A549 (cell line): ENCODE measurements at regions of chr7 and their contacts with region 1.

Region 1: DNA sequence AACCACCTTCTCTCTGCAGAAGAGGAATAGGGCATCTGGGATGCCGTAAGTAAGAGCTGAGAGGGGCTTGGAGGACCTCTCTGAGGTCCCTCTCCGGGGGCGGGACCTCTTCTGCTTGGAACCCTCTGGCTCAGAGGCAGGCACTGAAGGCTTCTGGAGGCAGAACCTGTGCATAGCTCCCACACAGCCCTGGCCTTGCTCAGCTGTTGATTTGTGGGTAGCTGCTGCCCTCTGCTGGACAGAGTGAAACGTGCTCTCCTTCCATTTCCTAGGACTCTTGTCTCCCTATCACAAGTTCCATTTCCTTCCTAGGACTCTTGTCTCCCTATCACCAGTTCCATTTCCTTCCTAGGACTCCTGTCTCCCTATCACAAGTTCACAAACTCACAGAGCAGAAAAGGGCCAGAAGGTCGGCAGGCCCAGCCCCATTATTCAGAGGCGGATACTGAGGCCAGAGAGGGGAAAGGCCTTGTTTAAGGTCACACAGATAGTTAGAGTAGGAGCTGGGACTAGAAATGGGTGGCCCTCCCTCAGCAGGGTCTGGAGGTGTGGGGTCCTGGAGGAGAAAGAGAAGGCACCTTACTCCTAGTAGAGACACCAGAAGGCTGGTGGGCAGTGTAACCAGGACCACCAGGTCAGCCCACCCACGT is 30.3 kb upstream of the GARS1 start:
- DNase-seq: peak; percentile 64 to 83
- ATAC-seq: peak; percentile 98 to 99
- H3K4me3 ChIP-seq: no peak overlapping the region
- H3K27ac ChIP-seq: no peak overlapping the region
- H3K4me1 ChIP-seq: no peaks in the 10 kb centered on the region
- CTCF ChIP-seq: peak; percentile 91
- EP300 ChIP-seq: no peak
- POLR2A ChIP-seq: no peak
- RAD21 ChIP-seq: peak; percentile 89 to 93

Region 2: DNA sequence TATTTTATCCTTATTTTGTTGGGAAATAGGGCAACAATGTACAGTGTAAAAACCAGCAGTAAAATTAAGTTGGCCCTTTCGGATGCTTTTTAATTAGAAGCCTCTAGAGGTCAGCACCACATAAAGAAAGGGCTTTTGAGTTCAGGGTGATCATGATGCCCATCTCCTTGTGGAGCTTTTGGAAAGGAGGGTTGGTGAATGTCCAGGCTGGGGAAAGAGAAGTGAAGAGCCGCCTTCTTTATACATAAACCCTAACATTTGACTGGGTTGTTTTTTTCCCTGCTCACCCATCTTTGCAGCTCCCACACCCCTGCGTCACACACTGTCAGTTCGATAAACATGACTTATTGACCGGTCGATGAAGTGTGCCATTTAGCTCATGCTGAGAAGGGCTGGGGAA is 399.8 kb before region 1 on chr7:
- CTCF ChIA-PET with region 1: interaction called, 19 read pairs
- POLR2A ChIA-PET with region 1: no interaction called
- DNase-seq: peak; percentile 55 to 57
- ATAC-seq: peak; percentile 54 to 84; a peak in 5 of 6 replicates
- H3K4me3 ChIP-seq: no peak overlapping the region
- H3K27ac ChIP-seq: no peak overlapping the region
- H3K4me1 ChIP-seq: peaks cover 28% of the 10 kb centered on the region
- CTCF ChIP-seq: peak; percentile 84
- EP300 ChIP-seq: no peak
- POLR2A ChIP-seq: no peak
- RAD21 ChIP-seq: peak; percentile 84

Region 3: DNA sequence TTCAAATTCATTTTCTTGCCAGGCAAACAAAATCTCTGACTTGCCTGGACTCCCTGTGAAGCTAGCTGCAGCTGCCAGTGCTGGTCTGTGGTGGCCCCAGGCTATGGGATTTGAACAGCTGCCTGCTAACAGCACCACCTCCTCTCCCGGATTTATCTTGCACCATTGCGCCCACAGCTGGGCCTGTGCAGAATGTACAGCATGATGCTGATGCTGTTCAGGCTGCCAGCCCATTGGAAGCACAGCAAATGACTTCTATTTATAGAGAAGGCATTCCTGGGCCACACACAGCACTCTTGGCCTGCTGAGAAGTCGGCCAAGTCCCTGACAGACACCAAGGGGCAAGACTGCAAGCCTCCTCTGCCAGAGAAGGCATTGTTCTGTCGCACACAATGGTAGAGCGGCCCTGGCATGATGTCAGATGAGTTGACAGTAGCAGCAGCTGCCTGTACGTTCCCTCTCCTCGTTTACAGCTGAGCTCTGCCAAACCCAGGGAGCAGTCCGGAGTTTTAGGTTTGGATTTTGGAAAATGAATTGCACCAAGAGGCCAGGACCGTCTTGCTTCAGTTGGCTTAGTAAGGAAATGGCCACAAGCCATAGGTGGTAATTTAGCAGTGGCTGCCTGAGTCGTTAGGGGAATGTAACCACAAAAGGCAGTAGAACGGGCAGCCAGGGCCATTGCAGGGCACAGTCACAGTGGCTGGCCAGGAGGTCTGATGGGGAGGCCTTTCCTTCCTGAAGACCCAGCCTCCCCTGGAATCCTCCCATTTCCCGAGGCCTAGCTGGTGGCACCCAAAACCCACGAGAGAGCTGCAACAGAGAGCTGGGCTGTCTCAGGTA is 391.1 kb before region 1 on chr7:
- CTCF ChIA-PET with region 1: interaction called, 15 read pairs
- POLR2A ChIA-PET with region 1: no interaction called
- DNase-seq: peak in 1 of 2 experiments; percentile 48
- ATAC-seq: peak; percentile 41 to 69; a peak in 4 of 6 replicates
- H3K4me3 ChIP-seq: no peak overlapping the region
- H3K27ac ChIP-seq: no peak overlapping the region
- H3K4me1 ChIP-seq: peaks cover 28% of the 10 kb centered on the region; the same call in 2 of the 3 replicates
- CTCF ChIP-seq: no peak
- EP300 ChIP-seq: no peak
- POLR2A ChIP-seq: no peak
- RAD21 ChIP-seq: no peak

Region 4: DNA sequence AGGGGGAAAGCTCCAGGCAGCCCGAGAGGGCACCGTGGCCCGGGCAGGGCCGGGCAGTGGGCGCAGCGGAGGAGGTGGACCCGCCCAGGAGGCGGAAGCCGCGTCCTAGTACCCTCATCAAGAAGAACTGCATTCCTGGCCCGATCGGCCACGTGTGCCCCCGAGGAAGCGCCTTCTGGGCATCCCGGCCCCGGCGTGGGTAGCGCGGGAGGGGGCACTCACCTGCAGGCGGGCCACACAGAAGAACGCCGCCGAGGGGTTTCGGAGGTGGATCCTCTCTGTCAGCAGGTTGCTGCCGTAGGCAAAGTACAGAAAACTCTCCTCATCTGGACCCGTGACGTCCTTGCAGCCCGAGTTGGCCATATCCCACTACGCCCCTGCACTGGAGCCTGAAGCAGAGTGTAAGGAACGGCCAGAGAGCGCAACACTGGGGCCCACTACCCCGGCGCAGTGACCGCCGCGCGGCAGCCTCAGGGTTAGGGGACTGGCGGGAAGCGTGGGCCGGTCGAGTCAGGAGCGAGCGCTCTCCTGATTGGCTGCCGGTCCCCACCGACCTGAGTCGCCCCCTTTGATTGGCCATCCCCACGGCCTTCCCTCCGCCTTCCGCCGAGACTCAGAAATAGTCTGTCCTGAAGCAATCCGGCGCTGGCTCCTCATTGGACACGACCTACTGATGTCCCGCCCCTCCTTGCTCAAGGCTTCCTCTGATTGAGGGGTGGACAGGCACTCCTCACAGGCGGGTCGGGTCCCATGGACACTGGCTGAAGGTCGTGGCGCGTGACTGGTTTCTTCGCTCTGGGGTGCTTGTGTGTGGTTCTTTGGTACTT is 59.8 kb before region 1 on chr7 and contains the start of gene GGCT:
- CTCF ChIA-PET with region 1: interaction called, 45 read pairs
- POLR2A ChIA-PET with region 1: no interaction called
- DNase-seq: peak; percentile 96 to 99
- ATAC-seq: peak; percentile 98 to 99
- H3K4me3 ChIP-seq: peak within 1 kb of the TSS; percentile 82
- H3K27ac ChIP-seq: peak within 1 kb of the TSS; percentile 82 to 96
- H3K4me1 ChIP-seq: peaks cover 18% of the 10 kb centered on the region
- CTCF ChIP-seq: no peak
- EP300 ChIP-seq: no peak; a peak in 1 of 5 replicates
- POLR2A ChIP-seq: peak; percentile 82
- RAD21 ChIP-seq: no peak
- polyA plus RNA-seq, gene GGCT: 39.9 and 69.7 TPM in 2 replicates

Region 5: DNA sequence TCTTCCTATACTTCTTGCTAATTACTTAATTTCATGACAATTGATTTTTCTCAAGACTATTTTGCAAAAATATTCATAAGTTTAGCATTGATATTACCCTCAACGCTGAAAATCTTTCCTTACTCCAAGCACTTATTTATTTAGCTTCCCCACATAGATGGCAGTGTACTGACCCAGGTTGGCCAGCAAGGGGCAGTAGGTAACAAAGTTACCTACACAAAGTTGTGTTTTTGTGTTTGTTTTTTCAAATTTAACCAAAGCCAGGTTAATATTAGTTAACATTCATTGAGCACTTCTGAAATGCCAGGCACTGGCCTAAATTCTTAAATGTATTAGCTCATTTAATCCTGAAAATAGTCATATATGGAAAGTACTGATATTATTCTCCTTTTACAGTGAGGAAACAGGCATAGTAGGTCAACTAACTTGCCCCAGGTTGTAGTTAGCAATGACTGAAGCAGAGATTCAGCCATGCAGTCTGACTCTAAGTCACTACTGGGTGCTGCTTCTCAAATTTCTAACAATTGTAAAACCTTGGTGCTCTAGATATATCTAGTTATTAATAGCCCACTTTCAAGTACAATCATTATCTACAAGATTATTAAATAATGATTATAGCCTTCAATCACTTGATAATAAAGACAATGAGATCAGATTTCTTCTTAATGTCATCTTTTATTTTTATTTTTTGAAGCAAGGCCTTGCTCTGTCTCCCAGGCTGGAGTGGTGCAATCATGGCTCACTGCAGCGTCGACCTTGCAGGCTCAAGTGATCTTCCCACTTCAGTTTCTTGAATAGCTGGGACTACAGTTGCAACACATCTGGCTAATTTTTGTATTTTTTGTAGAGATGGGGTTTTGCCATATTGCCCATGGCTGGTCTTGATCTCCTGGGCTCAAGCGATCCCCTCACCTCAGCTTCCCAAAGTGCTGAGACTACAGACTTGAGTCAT is 54.0 kb before region 1 on chr7:
- CTCF ChIA-PET with region 1: interaction called, 45 read pairs
- POLR2A ChIA-PET with region 1: no interaction called
- DNase-seq: peak in 1 of 2 experiments; percentile 63
- ATAC-seq: peak; percentile 78 to 80; a peak in 4 of 6 replicates
- H3K4me3 ChIP-seq: no peak overlapping the region
- H3K27ac ChIP-seq: no peak overlapping the region
- H3K4me1 ChIP-seq: 0 out of 3 replicates have a peak, but pooled peaks cover 3% of the 10 kb centered on the region
- CTCF ChIP-seq: peak; percentile 69
- EP300 ChIP-seq: no peak
- POLR2A ChIP-seq: no peak
- RAD21 ChIP-seq: peak; percentile 54 to 58; a peak in 4 of 5 replicates

Region 6: DNA sequence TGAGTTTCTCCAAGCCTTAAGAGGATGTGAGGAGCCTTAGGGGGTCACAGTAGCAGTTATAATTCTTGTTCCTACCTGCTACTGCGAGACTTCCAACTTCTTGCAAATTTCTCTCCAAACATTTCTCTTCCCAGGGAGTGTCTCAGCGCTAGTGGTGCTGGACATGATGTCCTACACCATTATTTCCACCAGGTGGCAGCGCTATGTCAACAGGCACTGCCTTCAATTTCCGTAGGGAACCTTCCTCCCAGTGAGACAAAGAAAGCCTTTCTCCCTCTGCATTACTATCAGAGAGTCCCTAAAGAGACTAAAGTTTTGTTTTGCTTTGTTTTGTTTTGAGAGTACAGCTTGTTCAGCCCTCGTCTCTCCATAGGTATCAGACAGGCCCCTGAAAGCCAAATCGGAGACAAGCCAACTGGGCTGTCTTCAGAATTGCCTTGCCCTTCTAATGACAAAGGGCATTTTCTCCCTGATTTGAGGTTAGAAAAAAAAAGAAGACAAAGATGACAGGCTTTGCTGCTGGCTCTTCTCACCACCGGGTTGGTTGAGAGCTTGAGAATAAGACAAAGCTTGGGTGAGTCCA is 15.5 kb before region 1 on chr7:
- CTCF ChIA-PET with region 1: interaction called, 171 read pairs
- POLR2A ChIA-PET with region 1: no interaction called
- DNase-seq: peak; percentile 69 to 79
- ATAC-seq: peak; percentile 94 to 97
- H3K4me3 ChIP-seq: no peak overlapping the region
- H3K27ac ChIP-seq: no peak overlapping the region
- H3K4me1 ChIP-seq: peaks cover 9% of the 10 kb centered on the region; the same call in 2 of the 3 replicates
- CTCF ChIP-seq: peak; percentile 73
- EP300 ChIP-seq: no peak
- POLR2A ChIP-seq: no peak
- RAD21 ChIP-seq: peak; percentile 47 to 57

Region 7: DNA sequence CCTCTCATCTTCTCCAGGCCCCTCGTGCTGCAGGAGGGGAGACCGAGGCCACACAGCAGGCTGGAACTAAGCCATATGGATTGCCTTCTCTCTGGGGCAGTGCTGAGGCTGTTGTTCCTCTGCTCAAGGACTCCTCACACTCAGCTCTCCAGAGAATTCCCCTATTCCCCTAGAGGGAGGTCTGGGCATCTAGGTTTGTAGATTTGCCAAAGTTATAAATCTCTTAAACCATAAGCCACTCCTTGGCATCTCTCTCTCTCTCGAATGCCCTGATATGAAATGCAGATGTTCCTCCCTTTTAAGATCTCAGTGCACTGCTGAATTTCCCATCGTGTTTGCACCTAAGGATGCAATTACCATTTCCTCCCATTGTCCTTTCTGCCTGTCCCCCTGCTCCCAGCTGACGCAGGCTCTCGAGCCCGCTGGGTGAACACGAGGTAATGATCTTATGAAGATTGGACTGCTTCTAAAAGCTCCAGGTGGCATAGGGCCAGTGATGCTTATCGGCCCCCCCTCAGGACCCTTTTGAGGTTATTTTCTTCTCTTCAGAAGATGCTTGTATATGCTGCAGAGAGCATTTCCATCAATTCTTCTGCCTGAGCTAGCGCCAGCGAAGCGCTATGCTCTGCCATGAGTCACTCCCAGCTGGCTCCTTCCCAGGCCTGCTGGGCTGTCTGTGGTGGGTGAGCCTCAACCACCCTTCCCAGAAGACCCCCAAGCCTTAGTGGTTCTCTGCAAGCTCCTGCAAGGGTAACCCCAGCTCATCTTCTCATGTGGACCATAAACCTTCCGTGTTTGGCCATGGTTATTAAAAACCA is 305.6 kb after region 1 on chr7:
- CTCF ChIA-PET with region 1: no interaction called
- POLR2A ChIA-PET with region 1: no interaction called
- DNase-seq: no peak
- ATAC-seq: no peak
- H3K4me3 ChIP-seq: no peak overlapping the region
- H3K27ac ChIP-seq: no peak overlapping the region
- H3K4me1 ChIP-seq: no peaks in the 10 kb centered on the region
- CTCF ChIP-seq: no peak
- EP300 ChIP-seq: no peak
- POLR2A ChIP-seq: no peak
- RAD21 ChIP-seq: no peak